K562 (cell line): ENCODE measurements at regions of chr3 and their contacts with region 1.

Region 1: DNA sequence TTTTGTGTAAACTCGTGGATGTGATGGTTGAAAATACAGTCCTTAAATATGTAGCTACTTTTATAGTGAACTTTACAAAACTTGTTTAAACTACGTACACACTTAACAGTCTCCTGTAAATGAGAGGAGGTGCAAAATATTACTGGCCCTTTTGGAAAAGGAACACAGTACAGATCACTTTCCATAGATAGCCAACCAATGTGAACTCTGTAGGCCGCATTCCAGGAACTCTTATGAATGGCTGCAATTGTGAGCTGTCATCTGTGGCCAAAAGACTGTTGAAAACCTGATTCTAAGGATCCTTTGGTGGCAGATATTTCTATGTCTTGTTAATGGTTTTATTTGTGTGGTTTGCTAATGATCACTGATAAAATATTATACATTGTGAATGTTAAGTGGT is 6.2 kb downstream of the TSC22D2 start:
- DNase-seq: peak in 2 of 4 experiments; percentile 49 to 75
- ATAC-seq: peak; percentile 46
- H3K4me3 ChIP-seq: peak overlapping the region; percentile 81
- H3K27ac ChIP-seq: peak overlapping the region; percentile 19; the same call in 2 of the 3 replicates
- H3K4me1 ChIP-seq: peaks cover 18 to 20% of the 10 kb centered on the region in 2 experiments; a peak in 3 of 5 replicates
- H3K27me3 ChIP-seq: no peaks in the 10 kb centered on the region
- CTCF ChIP-seq: no peak
- EP300 ChIP-seq: no peak
- POLR2A ChIP-seq: no peak
- RAD21 ChIP-seq: no peak

Region 2: GRCh38 chr3:150335631-150336030 is 78.6 kb before region 1 on chr3:
- CTCF ChIA-PET with region 1: no interaction called
- POLR2A ChIA-PET with region 1: no interaction called
- in situ Hi-C with region 1: no loop called
- intact Hi-C with region 1: no loop called
- DNase-seq: no peak
- ATAC-seq: no peak
- H3K4me3 ChIP-seq: no peak overlapping the region
- H3K27ac ChIP-seq: no peak overlapping the region
- H3K4me1 ChIP-seq: no peaks in the 10 kb centered on the region
- H3K27me3 ChIP-seq: peaks cover 3 to 8% of the 10 kb centered on the region in 2 experiments; a peak in 3 of 5 replicates
- CTCF ChIP-seq: no peak
- EP300 ChIP-seq: no peak
- POLR2A ChIP-seq: no peak
- RAD21 ChIP-seq: no peak

Region 3: DNA sequence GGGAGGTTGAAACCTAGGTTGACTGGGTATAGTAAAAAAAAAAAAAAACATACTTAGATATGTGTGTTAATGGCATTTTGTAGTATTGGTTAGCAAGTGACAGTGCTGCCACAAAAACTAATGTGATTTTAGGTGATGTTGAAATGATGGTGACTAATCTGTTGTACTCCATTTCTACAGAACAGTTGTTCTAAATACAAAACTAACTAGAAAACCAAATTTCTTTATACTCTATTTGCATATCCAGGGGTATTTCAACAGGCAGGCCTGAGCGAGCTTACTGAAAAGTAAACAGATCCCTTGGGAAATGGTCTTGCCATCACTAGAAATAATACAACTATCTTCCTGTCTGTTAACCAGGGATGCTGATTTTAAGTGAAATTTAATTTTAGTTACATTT is 14.3 kb after region 1 on chr3:
- CTCF ChIA-PET with region 1: no interaction called
- POLR2A ChIA-PET with region 1: interaction called, 30 read pairs
- in situ Hi-C with region 1: no loop called
- intact Hi-C with region 1: loop called (anchors 2 kb)
- DNase-seq: no peak
- ATAC-seq: no peak
- H3K4me3 ChIP-seq: no peak overlapping the region
- H3K27ac ChIP-seq: no peak overlapping the region
- H3K4me1 ChIP-seq: peaks cover 0 to 39% of the 10 kb centered on the region in 2 experiments; a peak in 3 of 5 replicates
- H3K27me3 ChIP-seq: no peaks in the 10 kb centered on the region
- CTCF ChIP-seq: no peak
- EP300 ChIP-seq: no peak
- POLR2A ChIP-seq: no peak
- RAD21 ChIP-seq: no peak

Region 4: DNA sequence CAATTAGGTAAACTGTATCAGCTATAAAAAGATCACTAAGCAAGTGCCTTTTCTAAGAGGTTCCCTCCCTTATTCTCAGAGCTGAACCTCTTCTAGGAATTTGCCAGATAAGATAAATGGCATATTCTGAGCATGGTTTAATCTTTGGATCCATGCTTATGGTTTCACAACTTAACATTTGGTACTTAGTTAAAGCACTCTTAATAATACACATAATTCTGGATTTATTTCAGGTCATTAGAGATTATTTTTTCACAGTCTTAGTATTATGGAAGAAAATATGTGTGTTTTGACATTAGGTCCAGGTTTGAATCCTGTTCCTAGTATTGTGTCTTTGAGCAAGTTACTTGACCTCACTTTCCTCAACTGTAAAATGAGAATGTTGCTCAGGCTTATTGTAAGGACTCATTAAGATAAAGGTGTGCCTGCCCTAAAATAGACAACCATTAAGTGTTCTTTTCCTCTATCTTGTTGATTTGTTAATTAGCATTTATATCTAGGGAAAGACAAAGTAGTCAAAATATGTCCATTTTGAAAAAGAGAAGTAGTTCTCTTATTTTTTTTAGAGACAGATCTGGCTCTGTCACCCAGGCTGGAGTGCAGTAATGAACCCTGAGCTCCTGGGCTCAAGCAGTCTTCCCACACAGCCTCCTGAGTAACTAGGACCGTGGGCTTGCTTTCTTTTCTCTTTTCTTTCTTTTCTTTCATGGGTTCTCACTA is 37.2 kb after region 1 on chr3:
- CTCF ChIA-PET with region 1: no interaction called
- POLR2A ChIA-PET with region 1: interaction called, 3 read pairs
- in situ Hi-C with region 1: no loop called
- intact Hi-C with region 1: loop called (anchors 1 kb)
- DNase-seq: peak; percentile 33 to 83 (median 50)
- ATAC-seq: peak; percentile 72
- H3K4me3 ChIP-seq: peak overlapping the region; percentile 5; the same call in 1 of the 2 replicates
- H3K27ac ChIP-seq: peak overlapping the region; percentile 85
- H3K4me1 ChIP-seq: peaks cover 26 to 53% of the 10 kb centered on the region in 2 experiments
- H3K27me3 ChIP-seq: no peaks in the 10 kb centered on the region
- CTCF ChIP-seq: no peak
- EP300 ChIP-seq: peak; percentile 97
- POLR2A ChIP-seq: no peak
- RAD21 ChIP-seq: peak in 1 of 2 experiments; percentile 14; a peak in 1 of 4 replicates